Posterior cingulate gyrus (tissue), 11 donors: ENCODE measurements at regions of chr9 and their contacts with region 1.

Region 1: GRCh38 chr9:129495534-129496325 is 125.2 kb downstream of the C9orf50 start:
- DNase-seq: peak; percentile 93 to 99 (median 96)

Region 2: DNA sequence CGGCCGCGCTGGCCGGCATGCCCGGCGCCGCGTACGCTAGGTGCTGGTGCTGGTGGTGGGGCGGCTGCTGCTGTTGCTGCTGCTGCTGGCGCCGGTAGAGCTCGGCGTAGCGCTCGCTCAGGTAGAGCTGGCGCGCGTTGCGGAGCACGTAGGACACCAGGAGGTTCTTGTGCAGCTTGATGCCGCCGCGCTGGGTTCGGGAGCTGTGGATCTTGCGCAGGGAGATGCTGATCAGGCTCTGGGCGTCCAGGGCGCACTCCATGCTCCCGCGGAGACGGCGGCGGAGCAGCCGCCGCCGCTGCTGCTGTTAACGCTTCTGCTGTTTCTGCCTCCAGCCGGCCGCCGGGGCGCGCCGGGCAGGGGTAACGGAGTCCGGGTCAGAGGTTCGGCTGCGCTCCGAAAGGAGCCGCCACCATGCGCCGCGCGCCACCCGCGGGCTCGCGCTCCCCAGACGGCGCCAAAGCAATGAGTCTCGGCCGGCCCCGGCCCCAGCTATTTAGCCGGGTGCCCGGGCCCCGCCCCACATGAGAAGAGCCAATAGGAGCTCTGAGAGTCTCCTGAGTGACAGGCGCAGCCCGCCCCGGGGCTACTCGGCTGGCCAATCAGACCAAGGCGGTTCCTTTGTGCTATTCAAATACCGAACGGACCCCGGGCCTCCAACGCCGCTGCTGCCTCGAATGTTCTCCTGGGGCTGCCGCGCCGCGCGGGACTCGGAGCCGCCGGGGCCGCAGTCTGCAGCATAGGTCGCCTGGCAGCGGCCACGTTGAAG is 317.8 kb before region 1 on chr9 and contains the start of gene IER5L:
- intact Hi-C with region 1: loop called (anchors 5 kb)
- DNase-seq: peak; percentile 93 to 100 (median 98)

Region 3: DNA sequence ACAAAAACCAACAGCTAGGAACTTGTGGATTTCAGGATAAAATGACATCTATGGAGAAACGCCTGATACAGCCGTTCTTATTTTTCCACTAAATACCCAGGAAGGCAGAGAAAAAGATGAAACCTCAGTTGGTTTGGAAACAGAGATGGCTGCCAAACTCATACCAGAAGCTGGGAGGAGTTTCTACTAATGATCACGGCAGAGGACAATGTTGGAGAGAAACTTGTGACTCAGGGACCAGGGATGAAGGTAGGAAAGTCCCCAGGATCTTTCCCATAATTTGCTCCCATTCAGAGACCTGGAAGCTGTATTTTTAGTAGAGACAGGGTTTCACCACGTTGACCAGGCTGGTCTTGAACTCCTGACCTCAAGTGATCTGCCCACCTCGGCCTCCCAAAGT is 130.5 kb before region 1 on chr9:
- intact Hi-C with region 1: no loop called
- DNase-seq: no peak

Region 4: DNA sequence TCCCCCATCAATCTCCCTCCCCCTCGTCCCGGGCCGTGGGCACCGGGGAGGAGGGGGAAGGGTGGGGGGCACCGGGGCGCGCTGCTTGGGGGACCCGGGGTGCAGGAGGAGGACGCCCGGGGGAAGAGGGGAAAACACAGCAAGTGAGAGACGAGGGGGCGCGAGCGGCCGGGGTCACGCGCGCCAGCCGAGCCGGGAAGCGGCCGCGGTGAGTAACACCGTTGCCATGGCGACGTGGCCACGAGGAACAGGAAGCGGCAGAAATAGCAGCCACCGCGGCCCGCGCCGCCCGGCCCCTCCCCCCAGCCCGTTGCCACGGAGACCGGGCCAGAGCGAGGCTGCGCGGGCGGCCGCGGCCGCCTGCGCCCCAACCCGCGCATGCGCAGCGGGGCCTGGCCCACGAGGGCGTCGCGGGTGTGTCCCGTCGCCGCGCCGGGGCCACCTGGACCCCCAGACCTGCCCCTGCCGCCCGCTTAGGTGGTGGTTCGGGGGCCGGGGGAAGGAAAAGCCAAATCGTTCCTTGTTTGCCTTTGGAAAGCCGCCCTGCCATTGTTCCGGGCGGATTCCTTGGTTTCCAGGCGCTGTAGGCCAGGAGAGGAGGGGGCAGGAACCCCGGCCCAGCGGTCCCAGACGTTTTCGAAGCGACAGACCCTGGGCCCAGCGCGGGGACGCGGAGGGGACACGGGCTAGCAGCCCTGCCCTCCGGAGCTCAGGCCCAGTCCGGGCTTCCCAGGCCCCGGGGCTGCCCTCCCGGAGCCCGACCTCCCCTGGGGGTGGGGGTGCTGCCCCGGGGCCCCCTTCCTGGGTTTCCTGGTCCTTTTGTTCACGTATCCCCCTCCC is 82.0 kb before region 1 on chr9:
- intact Hi-C with region 1: loop called (anchors 5 kb)
- DNase-seq: peak; percentile 96 to 100 (median 98)

Region 5: DNA sequence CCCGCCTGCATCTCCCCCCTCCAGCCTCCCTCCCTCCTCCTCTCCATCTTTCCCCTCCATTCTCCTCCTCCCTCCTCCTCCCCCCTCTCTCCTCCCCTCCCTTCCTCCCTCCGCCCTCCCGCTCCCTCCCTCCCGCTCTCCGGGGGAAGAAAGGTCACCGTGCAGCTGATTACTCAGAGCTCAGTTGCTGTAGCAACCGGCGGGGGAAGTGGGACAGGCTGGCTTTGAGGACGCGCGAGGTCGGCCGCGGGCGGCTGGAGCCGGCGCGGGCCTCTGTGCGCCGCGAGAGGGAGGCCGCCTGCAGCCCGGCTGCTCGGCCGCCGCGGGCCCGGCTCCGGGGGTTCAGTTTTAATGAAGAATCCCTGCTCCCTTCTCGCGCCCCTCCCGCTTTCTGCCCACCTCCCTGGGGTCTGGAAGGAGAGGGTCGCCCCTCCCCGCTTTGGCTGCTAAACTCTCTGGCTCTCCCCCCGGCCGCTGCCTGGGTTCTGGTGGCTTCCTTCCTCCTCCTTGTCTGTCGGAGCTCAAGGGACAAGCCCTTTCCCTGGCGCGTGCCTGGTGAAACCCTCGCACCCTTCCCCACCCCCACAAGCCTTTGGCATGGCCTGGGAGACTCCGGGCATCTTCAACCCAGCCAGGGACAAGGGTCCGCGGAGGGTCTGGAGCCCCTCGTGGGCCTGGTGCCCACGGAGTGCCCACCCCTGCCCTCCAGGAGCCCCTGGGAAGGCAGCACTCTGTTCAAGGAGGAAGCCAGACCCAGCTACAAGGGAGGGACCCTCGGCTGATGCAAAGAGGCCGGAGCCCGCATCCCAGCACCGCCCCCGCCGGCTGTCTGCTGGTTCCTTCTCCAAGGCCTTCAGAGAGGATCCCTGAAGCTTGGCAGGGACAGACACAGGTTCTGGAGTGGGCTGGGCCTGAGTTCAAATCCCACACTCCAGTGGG is 35.1 kb before region 1 on chr9:
- intact Hi-C with region 1: loop called (anchors 5 kb)
- DNase-seq: peak; percentile 94 to 99 (median 96)

Region 6: DNA sequence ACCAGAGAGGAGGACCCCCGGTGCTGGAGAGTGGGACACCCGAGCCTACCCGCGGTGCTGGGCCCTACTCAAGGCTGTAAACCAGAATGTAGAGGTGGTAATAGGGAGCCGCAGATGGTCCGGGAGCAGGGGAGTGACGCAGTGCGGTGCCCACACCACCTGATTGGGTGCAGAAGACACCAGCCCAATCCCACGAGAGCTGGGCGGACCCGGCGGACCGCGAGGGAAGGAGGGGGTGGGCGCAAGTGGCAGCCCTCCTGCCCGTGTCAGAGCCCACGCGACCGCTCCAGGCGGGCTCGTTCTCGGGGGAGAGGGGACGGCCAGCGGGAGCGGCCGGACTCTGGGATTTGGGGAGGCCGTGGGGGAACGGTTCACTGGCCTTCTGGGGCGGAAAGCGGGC is 54.0 kb after region 1 on chr9:
- intact Hi-C with region 1: loop called (anchors 5 kb)
- DNase-seq: peak; percentile 63 to 98 (median 83)

Region 7: GRCh38 chr9:130712564-130713285 is 1217.0 kb after region 1 on chr9:
- intact Hi-C with region 1: no loop called
- DNase-seq: peak; percentile 95 to 100 (median 98)